GM12878 (cell line): ENCODE measurements at regions of chr1 and their contacts with region 1.

Region 1: DNA sequence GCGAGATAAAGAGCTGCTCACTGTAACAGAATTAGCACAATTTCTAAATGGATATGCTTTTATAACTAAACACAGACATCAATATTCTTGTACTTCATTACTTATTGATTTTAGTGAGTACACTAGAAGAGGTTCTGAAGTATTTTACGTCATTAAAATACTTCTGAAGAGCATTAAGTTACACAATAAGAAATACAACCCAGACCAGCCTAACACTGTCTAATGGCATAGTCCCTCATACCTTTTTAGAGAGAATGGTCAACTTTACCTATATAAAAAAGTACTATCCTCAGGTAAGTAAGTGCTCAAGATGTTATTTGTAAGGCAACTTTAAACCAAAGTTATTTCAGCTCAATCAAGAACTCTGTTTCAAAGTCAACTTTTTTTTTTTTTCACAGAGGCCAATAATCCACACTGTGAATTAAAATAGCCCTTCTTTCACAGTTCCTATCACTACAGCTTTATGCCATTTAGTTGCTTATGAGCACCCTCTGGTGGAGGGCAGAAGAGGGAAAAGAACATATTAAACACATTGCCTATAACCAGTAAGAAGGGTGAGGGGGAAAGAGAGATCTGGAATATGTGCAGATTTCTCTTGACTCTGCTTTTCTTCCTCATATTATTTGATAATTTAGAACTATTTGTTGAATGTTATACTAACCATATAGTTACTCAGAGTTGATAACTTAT is 182.1 kb upstream of the DMRTA2 start:
- DNase-seq: no peak
- ATAC-seq: peak; percentile 88
- H3K4me3 ChIP-seq: no peak overlapping the region
- H3K27ac ChIP-seq: no peak overlapping the region
- H3K4me1 ChIP-seq: no peaks in the 10 kb centered on the region
- H3K27me3 ChIP-seq: no peaks in the 10 kb centered on the region
- CTCF ChIP-seq: peak; percentile 45 to 58 (median 50); a peak in 5 of 6 replicates
- EP300 ChIP-seq: no peak
- POLR2A ChIP-seq: no peak
- RAD21 ChIP-seq: peak; percentile 71

Region 2: DNA sequence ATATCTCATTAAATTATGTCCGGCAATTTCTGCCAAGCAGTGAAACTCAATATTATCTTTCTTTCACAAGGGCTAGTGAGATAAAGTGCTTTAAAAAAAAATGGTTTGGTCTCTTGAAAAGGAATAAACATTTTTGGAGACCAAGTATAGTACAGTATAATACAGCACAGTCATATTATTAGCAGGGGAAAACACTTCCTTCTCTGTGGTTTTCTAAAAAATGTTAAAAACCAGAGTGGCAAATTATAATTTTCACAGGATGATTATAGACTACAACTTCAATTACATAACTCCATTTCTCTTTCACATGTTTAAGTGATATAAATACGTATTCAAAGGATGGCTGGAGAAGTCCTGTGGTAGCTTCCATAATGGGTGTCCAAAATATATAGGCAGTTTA is 11.8 kb before region 1 on chr1:
- CTCF ChIA-PET with region 1: interaction called, 19 read pairs
- POLR2A ChIA-PET with region 1: no interaction called
- RAD21 ChIA-PET with region 1: interaction called, 5 read pairs
- SMC1A ChIA-PET with region 1: interaction called, 4 read pairs
- in situ Hi-C with region 1: no loop called
- intact Hi-C with region 1: no loop called
- DNase-seq: no peak
- ATAC-seq: peak; percentile 42
- H3K4me3 ChIP-seq: no peak overlapping the region
- H3K27ac ChIP-seq: no peak overlapping the region
- H3K4me1 ChIP-seq: no peaks in the 10 kb centered on the region
- H3K27me3 ChIP-seq: no peaks in the 10 kb centered on the region
- CTCF ChIP-seq: no peak
- EP300 ChIP-seq: no peak
- POLR2A ChIP-seq: no peak
- RAD21 ChIP-seq: no peak